T-cell (primary cell): ENCODE measurements at regions of chr9 and their contacts with region 1.

Region 1: GRCh38 chr9:99140685-99141314 is 35.9 kb downstream of the TGFBR1 start:
- DNase-seq: peak in 33 of 35 experiments; percentile 17 to 80 (median 44)
- ATAC-seq: peak; percentile 63 to 83 (median 78)
- H3K4me3 ChIP-seq: no peak overlapping the region
- H3K4me3 Mint-ChIP-seq: no peak overlapping the region
- H3K27ac ChIP-seq: peak overlapping the region; percentile 24
- H3K27ac Mint-ChIP-seq: peak overlapping the region; percentile 2 to 19
- H3K4me1 ChIP-seq: peaks cover 9 to 16% of the 10 kb centered on the region in 2 experiments
- H3K4me1 Mint-ChIP-seq: peaks cover 41 to 53% (median 43%) of the 10 kb centered on the region in 3 donors
- H3K27me3 ChIP-seq: no peaks in the 10 kb centered on the region
- H3K27me3 Mint-ChIP-seq: no peaks in the 10 kb centered on the region

Region 2: GRCh38 chr9:98848450-98849149 is 292.2 kb before region 1 on chr9:
- CTCF ChIA-PET with region 1: interaction called, 12 to 16 read pairs
- POLR2A ChIA-PET with region 1: no interaction called
- DNase-seq: peak; percentile 35 to 82 (median 62)
- ATAC-seq: peak; percentile 87 to 94 (median 90)
- H3K4me3 ChIP-seq: no peak overlapping the region
- H3K4me3 Mint-ChIP-seq: no peak overlapping the region
- H3K27ac ChIP-seq: no peak overlapping the region
- H3K27ac Mint-ChIP-seq: peak overlapping the region; percentile 13 to 30
- H3K4me1 ChIP-seq: peaks cover 0 to 3% of the 10 kb centered on the region in 2 experiments
- H3K4me1 Mint-ChIP-seq: peaks cover 6 to 10% (median 7%) of the 10 kb centered on the region in 3 donors
- H3K27me3 ChIP-seq: no peaks in the 10 kb centered on the region
- H3K27me3 Mint-ChIP-seq: no peaks in the 10 kb centered on the region

Region 3: DNA sequence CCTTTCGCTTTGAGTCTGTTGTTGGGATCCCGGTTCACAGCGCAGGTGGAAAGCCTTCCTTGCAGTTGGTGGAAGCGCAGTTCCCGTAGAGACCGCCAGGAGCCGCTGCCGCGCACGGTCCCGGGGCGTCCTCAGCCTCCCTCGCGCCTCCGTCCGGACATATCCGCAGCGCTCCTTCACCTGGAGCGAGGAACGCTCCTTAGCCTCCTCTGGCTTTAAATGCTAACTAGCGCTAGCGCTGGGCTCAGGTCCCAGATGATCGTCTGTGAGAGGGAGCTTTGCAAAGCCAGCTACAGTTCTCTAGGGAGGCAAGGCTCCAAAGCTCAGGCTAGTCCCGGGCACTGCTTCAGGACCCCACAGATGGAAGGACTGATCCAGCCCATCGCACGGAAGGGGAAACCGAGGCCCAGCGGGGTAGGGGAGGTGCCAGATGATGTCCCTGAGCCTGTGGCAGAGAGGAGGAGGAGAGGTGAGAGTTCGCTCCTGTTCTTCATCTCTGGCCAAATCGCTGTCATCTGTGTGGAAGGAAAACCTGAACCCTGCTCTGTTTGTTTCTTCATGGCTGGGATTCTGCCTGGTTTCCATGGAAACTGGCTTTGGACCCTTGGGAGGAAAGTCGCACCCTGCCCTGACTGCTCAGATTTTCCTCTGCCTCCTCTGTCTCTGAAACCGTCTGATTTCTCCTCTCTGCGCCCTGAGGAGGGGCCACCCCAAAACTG is 165.6 kb before region 1 on chr9:
- CTCF ChIA-PET with region 1: interaction called, 11 to 12 read pairs
- POLR2A ChIA-PET with region 1: no interaction called
- DNase-seq: peak; percentile 41 to 84 (median 72)
- ATAC-seq: peak; percentile 90 to 97 (median 95)
- H3K4me3 ChIP-seq: peak overlapping the region; percentile 32 to 46
- H3K4me3 Mint-ChIP-seq: peak overlapping the region; percentile 17 to 46 (median 35)
- H3K27ac ChIP-seq: no peak overlapping the region
- H3K27ac Mint-ChIP-seq: no peak overlapping the region
- H3K4me1 ChIP-seq: peaks cover 5 to 9% of the 10 kb centered on the region in 2 experiments
- H3K4me1 Mint-ChIP-seq: peaks cover 5 to 12% (median 9%) of the 10 kb centered on the region in 3 donors
- H3K27me3 ChIP-seq: peaks cover 3 to 34% of the 10 kb centered on the region in 2 experiments
- H3K27me3 Mint-ChIP-seq: peaks cover 11 to 13% of the 10 kb centered on the region in 2 donors

Region 4: DNA sequence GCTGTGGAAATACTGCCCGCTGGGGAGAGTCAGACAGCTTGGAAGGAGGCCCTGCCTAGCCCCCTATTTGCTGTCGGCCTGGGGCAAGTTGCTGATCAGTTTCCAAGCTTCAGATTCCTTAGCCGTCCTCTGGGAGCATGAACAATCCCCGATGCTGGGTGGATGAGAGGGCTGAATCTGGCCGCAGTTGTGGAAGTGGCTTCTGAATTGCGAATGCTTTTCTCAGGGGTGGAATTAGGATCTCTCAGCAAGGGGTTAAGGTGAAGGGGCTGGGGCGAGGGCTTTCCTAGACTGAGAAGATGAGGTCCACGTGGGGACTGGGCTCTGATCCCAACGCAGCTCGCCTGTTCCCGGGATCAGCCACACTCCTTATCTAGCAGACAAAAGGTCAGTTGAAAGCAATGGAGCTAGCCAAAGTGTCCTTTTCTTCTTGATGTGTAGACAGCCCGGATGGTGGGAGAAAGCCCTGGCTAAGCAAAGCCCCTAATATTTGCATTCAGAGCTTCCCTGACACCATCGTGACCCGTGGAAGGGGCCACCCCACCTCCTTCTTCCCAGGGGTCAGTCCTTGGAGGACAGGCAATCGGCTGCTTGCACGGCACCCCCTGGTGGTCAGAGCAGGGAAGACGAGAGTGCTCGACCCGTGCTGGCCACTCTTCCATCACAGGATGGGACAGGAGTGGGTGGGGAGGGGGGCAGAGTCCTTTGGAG is 142.2 kb before region 1 on chr9:
- CTCF ChIA-PET with region 1: interaction called, 106 to 108 read pairs
- POLR2A ChIA-PET with region 1: no interaction called
- DNase-seq: peak in 26 of 35 experiments; percentile 6 to 62 (median 35)
- ATAC-seq: peak in 3 of 4 experiments; percentile 40 to 60 (median 51)
- H3K4me3 ChIP-seq: no peak overlapping the region
- H3K4me3 Mint-ChIP-seq: no peak overlapping the region
- H3K27ac ChIP-seq: no peak overlapping the region
- H3K27ac Mint-ChIP-seq: no peak overlapping the region
- H3K4me1 ChIP-seq: peaks cover 10 to 19% of the 10 kb centered on the region in 2 experiments
- H3K4me1 Mint-ChIP-seq: peaks cover 19 to 22% (median 21%) of the 10 kb centered on the region in 3 donors
- H3K27me3 ChIP-seq: peaks cover 0 to 25% of the 10 kb centered on the region in 2 experiments
- H3K27me3 Mint-ChIP-seq: peaks cover 0 to 7% of the 10 kb centered on the region in 2 donors

Region 5: GRCh38 chr9:99004717-99005460 is 135.9 kb before region 1 on chr9:
- CTCF ChIA-PET with region 1: interaction called, 106 to 108 read pairs
- POLR2A ChIA-PET with region 1: no interaction called
- DNase-seq: no peak
- ATAC-seq: no peak
- H3K4me3 ChIP-seq: no peak overlapping the region
- H3K4me3 Mint-ChIP-seq: no peak overlapping the region
- H3K27ac ChIP-seq: no peak overlapping the region
- H3K27ac Mint-ChIP-seq: no peak overlapping the region
- H3K4me1 ChIP-seq: peaks cover 10 to 11% of the 10 kb centered on the region in 2 experiments
- H3K4me1 Mint-ChIP-seq: peaks cover 16 to 22% (median 21%) of the 10 kb centered on the region in 3 donors
- H3K27me3 ChIP-seq: no peaks in the 10 kb centered on the region
- H3K27me3 Mint-ChIP-seq: no peaks in the 10 kb centered on the region

Region 6: DNA sequence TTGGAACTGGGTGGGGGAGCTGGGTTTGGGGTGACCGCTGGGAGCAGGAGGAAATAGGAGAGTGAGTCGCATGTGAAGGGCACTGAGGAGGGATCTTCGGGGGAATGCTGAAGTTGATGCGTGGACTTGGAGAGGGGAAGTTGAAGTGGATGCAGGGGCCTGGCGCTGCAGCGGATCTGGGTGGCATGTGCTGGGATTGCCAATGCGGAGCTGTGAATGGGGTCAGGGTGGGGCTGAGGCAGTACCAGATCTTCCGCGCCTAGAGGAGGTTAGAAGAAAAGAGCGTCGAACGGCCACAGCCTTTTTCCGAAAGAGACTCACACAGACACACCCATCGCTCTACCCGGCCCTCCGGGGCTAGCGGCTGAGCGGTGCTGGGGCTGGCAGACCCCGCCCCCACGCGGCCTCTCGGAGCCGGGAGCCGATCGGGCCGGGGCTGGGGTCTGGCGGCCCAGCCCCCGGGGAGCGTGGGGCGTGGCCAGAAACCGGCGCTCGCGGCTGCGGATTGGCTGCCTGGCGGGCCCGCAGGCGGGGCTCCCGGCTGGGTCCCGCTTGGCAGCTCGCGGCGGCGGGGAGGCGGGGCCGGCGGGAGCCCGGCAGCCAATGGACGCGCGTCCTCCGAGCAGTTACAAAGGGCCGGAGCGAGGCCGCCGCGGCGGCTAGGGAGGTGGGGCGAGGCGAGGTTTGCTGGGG is 36.2 kb before region 1 on chr9 and contains the start of gene TGFBR1:
- CTCF ChIA-PET with region 1: interaction called in 1 of 2 experiments, 3 read pairs
- POLR2A ChIA-PET with region 1: interaction called in 1 of 2 experiments, 11 read pairs
- DNase-seq: peak; percentile 75 to 95 (median 87)
- ATAC-seq: peak; percentile 86 to 91 (median 88)
- H3K4me3 ChIP-seq: peak within 1 kb of the TSS; percentile 85 to 86
- H3K4me3 Mint-ChIP-seq: peak within 1 kb of the TSS; percentile 90 to 94 (median 92)
- H3K27ac ChIP-seq: peak within 1 kb of the TSS; percentile 74
- H3K27ac Mint-ChIP-seq: peak within 1 kb of the TSS; percentile 95 to 97
- H3K4me1 ChIP-seq: peaks cover 37% of the 10 kb centered on the region in 2 experiments
- H3K4me1 Mint-ChIP-seq: peaks cover 53 to 68% (median 61%) of the 10 kb centered on the region in 3 donors
- H3K27me3 ChIP-seq: no peaks in the 10 kb centered on the region
- H3K27me3 Mint-ChIP-seq: no peaks in the 10 kb centered on the region
- total RNA-seq, gene TGFBR1: 22.3 to 36.9 (median 31.7) TPM

Region 7: DNA sequence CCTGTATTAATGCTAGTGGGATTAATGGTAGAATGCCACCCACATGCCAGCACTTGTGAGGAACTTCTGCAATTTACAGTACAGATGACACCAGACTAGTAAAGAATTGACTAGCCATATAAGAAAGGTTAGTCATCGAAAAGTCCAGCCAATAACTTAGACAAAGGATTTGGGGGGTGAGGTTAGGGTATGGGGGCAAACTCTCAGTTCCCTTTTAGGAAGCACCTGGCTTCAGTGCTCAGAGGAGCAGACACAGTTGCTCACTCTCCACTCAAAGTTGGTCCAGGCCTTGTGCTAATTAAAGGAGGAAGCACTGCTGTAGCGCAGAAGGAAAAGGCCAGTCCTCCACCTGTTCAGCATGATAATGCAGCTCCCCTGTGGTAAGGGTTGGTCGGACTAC is 10.7 kb before region 1 on chr9:
- CTCF ChIA-PET with region 1: interaction called, 3 to 11 read pairs
- POLR2A ChIA-PET with region 1: interaction called in 1 of 2 experiments, 3 read pairs
- DNase-seq: peak in 1 of 35 experiments; percentile 10
- ATAC-seq: peak in 1 of 4 experiments; percentile 37
- H3K4me3 ChIP-seq: no peak overlapping the region
- H3K4me3 Mint-ChIP-seq: peak overlapping the region in 1 of 3 donors; percentile 34
- H3K27ac ChIP-seq: no peak overlapping the region
- H3K27ac Mint-ChIP-seq: peak overlapping the region; percentile 60 to 61
- H3K4me1 ChIP-seq: peaks cover 35 to 67% of the 10 kb centered on the region in 2 experiments
- H3K4me1 Mint-ChIP-seq: peaks cover 76 to 88% (median 84%) of the 10 kb centered on the region in 3 donors
- H3K27me3 ChIP-seq: no peaks in the 10 kb centered on the region
- H3K27me3 Mint-ChIP-seq: no peaks in the 10 kb centered on the region